Natural killer cell (primary cell): ENCODE measurements at regions of chr15 and their contacts with region 1.

Region 1: GRCh38 chr15:30929064-30929669 is 25.5 kb downstream of the FAN1 start:
- DNase-seq: no peak
- ATAC-seq: no peak
- H3K4me3 ChIP-seq: no peak overlapping the region
- H3K4me3 Mint-ChIP-seq: no peak overlapping the region
- H3K27ac ChIP-seq: no peak overlapping the region
- H3K27ac Mint-ChIP-seq: no peak overlapping the region
- H3K4me1 ChIP-seq: no peaks in the 10 kb centered on the region
- H3K4me1 Mint-ChIP-seq: peaks cover 5 to 6% of the 10 kb centered on the region in 2 donors
- H3K27me3 ChIP-seq: no peaks in the 10 kb centered on the region
- H3K27me3 Mint-ChIP-seq: no peaks in the 10 kb centered on the region
- CTCF ChIP-seq: no peak

Region 2: GRCh38 chr15:31405200-31405920 is 476.2 kb after region 1 on chr15:
- intact Hi-C with region 1: loop called (anchors 5 kb)
- DNase-seq: no peak
- ATAC-seq: peak in 1 of 3 donors; percentile 29
- H3K4me3 ChIP-seq: no peak overlapping the region
- H3K4me3 Mint-ChIP-seq: no peak overlapping the region
- H3K27ac ChIP-seq: peak overlapping the region; percentile 26
- H3K27ac Mint-ChIP-seq: no peak overlapping the region
- H3K4me1 ChIP-seq: peaks cover 9% of the 10 kb centered on the region
- H3K4me1 Mint-ChIP-seq: peaks cover 13 to 28% of the 10 kb centered on the region in 2 donors
- H3K27me3 ChIP-seq: no peaks in the 10 kb centered on the region
- H3K27me3 Mint-ChIP-seq: peaks cover 0 to 2% of the 10 kb centered on the region in 2 donors
- CTCF ChIP-seq: no peak